ENCODE measurements at regions of chr11 and their contacts with region 1.

Region 1: GRCh38 chr11:60831143-60831500 is 10.8 kb upstream of the CCDC86 start:
- DNase-seq: peak; percentile 83
- H3K4me3 Mint-ChIP-seq: peak overlapping the region; percentile 35
- H3K27ac Mint-ChIP-seq: no peak overlapping the region
- H3K4me1 Mint-ChIP-seq: peaks cover 21% of the 10 kb centered on the region
- H3K27me3 Mint-ChIP-seq: peaks cover 8% of the 10 kb centered on the region
- CTCF ChIP-seq: peak; percentile 92

Region 2: DNA sequence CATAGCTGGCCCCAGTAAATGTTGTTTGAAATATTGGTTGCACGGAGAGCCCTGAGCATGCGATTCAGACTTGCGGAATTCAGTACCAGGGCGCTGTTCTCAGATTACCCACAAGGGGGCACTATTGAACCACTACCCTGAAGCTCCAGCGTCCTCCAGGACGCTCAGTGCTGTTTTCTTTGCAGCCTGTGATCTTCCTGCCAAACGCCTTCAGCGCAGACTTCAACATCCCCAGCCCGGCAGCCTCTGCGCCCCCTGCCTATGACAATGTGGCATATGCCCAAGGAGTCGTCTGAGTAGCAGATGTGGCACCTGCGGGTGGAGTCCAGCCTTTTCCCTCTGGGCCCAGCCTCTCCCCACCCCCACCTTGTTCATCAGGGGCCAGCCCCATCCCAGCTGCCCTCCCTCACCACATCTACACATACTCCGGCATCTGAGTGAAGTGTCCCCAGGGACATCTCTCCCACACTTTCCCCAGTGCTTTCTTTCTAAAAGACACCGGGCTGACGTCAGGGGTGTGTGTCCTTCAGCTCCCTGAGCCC is 55.6 kb before region 1 on chr11:
- CTCF ChIA-PET with region 1: interaction called, 31 read pairs
- POLR2A ChIA-PET with region 1: no interaction called
- intact Hi-C with region 1: loop called (anchors 2 kb)
- DNase-seq: peak; percentile 79
- H3K4me3 Mint-ChIP-seq: no peak overlapping the region
- H3K27ac Mint-ChIP-seq: no peak overlapping the region
- H3K4me1 Mint-ChIP-seq: peaks cover 16% of the 10 kb centered on the region
- H3K27me3 Mint-ChIP-seq: no peaks in the 10 kb centered on the region
- CTCF ChIP-seq: peak; percentile 82

Region 3: GRCh38 chr11:60871378-60872061 is 40.4 kb after region 1 on chr11:
- CTCF ChIA-PET with region 1: interaction called, 16 read pairs
- POLR2A ChIA-PET with region 1: interaction called, 3 read pairs
- intact Hi-C with region 1: no loop called
- DNase-seq: peak; percentile 44
- H3K4me3 Mint-ChIP-seq: no peak overlapping the region
- H3K27ac Mint-ChIP-seq: no peak overlapping the region
- H3K4me1 Mint-ChIP-seq: no peaks in the 10 kb centered on the region
- H3K27me3 Mint-ChIP-seq: no peaks in the 10 kb centered on the region
- CTCF ChIP-seq: no peak

Region 4: GRCh38 chr11:60906132-60906972 is 75.2 kb after region 1 on chr11 and contains the start of gene PRPF19:
- CTCF ChIA-PET with region 1: interaction called, 163 read pairs
- POLR2A ChIA-PET with region 1: interaction called, 16 read pairs
- intact Hi-C with region 1: no loop called
- DNase-seq: peak; percentile 97
- H3K4me3 Mint-ChIP-seq: peak within 1 kb of the TSS; percentile 87
- H3K27ac Mint-ChIP-seq: peak within 1 kb of the TSS; percentile 70
- H3K4me1 Mint-ChIP-seq: peaks cover 9% of the 10 kb centered on the region
- H3K27me3 Mint-ChIP-seq: peaks cover 11% of the 10 kb centered on the region
- CTCF ChIP-seq: no peak
- total RNA-seq, gene PRPF19: 99.0 and 115 TPM in 2 replicates

Region 5: GRCh38 chr11:61141601-61142028 is 310.5 kb after region 1 on chr11:
- CTCF ChIA-PET with region 1: interaction called, 12 read pairs
- POLR2A ChIA-PET with region 1: no interaction called
- intact Hi-C with region 1: no loop called
- DNase-seq: peak; percentile 12
- H3K4me3 Mint-ChIP-seq: no peak overlapping the region
- H3K27ac Mint-ChIP-seq: no peak overlapping the region
- H3K4me1 Mint-ChIP-seq: no peaks in the 10 kb centered on the region
- H3K27me3 Mint-ChIP-seq: no peaks in the 10 kb centered on the region
- CTCF ChIP-seq: no peak

Region 6: DNA sequence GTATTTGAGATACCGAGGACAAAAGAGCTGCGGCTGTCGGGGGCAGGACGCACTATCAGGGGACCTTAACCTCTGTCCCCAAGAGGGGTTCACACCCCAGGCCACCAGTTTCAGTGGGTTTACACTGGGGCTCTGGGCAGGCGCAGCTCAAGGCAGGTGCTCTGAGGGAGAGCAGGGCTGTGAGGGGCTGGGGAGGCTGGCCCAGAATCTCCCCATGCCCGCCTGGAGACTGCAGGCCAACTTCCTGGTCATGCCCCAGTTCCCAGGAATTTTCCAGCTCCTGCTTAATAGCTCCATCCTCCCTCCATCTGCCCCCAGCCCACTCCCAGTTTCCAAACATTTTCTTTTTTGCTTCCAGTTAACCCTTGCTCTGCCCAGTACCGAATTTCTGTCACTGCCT is 364.6 kb after region 1 on chr11:
- CTCF ChIA-PET with region 1: interaction called, 10 read pairs
- POLR2A ChIA-PET with region 1: no interaction called
- intact Hi-C with region 1: no loop called
- DNase-seq: no peak
- H3K4me3 Mint-ChIP-seq: no peak overlapping the region
- H3K27ac Mint-ChIP-seq: no peak overlapping the region
- H3K4me1 Mint-ChIP-seq: no peaks in the 10 kb centered on the region
- H3K27me3 Mint-ChIP-seq: peaks cover 50% of the 10 kb centered on the region
- CTCF ChIP-seq: no peak